Right ventricle myocardium superior (tissue), 1 donor: ENCODE measurements at regions of chr2 and their contacts with region 1.

Region 1: GRCh38 chr2:39436592-39437510 is at the start of gene MAP4K3:
- DNase-seq: peak; percentile 94
- ATAC-seq: peak; percentile 93
- total RNA-seq, gene MAP4K3: 37.8 TPM

Region 2: DNA sequence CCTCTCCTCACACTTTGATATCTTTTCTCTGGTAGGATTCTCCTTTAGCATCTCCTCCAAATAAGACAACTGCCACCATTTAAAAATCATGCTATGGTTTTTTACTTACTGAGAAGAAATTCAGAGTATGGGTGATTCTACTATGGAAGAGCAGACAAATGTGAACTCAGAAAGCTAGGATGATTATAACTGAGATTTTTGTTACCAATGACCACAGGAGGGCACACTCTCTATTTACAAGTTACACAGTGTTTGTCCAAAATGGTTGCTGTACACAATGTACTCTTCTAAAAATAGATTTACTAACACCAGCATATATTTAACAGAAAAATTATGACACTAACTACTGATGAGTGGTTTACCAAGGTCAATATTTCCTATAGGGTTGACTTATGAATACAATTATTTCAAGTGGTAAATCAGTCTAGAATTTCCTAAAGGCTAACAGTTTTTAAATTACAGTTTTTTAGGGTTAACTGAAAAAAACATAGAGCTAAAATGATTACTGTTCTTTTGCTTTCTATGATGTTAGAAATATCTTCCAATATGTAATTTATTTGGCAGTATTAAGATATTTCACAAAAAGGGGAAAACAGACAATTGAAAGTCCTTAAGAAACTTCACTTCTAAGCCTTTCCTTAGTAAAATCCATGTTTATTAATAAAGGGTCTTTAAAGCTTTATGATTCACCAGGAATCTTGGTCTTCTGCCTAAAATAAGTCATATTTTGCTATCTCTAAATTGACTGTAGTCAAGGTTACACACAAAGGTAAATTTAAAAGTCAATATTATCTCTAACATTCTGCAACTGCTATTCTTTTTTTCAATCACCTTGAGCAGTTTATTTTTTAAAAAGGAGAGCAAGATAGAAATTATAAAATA is 57.0 kb before region 1 on chr2:
- intact Hi-C with region 1: loop called (anchors 5 kb)
- DNase-seq: no peak
- ATAC-seq: peak; percentile 88

Region 3: DNA sequence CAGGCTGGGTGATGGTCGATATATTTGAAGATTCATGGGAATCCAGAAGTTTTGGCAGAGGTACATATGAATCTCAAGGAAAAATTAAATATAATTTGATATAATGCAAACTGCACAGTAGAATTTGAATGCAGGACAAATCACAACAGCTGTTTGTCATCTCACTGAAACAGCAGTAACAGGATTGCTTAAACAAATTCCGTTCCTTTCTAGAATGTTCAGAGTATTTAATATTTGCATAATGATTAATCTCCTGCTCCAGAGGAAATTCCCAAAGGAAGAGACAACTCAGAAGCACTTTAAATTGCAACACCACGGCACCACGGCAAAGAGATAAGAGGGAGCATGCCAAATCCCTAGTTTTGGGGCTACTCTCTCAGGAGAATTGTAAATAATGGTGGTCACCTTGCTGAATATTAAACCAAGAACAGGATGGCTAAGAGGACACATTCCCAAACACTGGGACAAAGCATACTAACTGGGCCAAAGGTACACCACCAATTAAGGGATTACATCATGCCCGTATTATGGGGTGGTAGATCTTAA is 68.0 kb after region 1 on chr2:
- intact Hi-C with region 1: loop called (anchors 5 kb)
- DNase-seq: no peak
- ATAC-seq: peak; percentile 50